ENCODE measurements at regions of chr2 and their contacts with region 1.

Region 1: DNA sequence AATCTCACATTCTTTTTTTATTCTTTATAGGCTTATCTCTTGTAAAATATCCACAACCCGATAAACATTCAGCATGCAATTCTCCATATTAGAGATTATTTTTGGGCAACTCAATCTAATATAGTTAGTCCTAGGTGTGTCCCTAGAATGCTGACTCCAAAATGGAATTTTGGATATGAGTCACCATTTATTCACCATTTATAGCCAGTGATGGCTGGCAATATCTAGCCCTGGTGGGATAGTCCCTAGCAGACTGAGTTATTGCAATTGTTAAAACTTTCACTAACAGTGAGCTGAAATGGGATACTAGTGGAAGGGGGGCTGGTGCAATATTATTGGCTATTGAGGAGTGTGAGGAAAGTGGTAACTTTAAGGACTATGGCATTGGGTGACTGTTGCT is 401.6 kb downstream of the SLC4A3 start:
- DNase-seq: no peak
- H3K4me3 ChIP-seq: no peak overlapping the region
- H3K27ac ChIP-seq: no peak overlapping the region
- H3K4me1 ChIP-seq: no peaks in the 10 kb centered on the region
- H3K27me3 ChIP-seq: no peaks in the 10 kb centered on the region
- CTCF ChIP-seq: no peak

Region 2: GRCh38 chr2:219968685-219969345 is 60.2 kb before region 1 on chr2:
- CTCF ChIA-PET with region 1: no interaction called
- POLR2A ChIA-PET with region 1: no interaction called
- intact Hi-C with region 1: no loop called
- DNase-seq: peak; percentile 86 to 89
- H3K4me3 ChIP-seq: no peak overlapping the region
- H3K27ac ChIP-seq: peak overlapping the region; percentile 86
- H3K4me1 ChIP-seq: peaks cover 35% of the 10 kb centered on the region
- H3K27me3 ChIP-seq: no peaks in the 10 kb centered on the region
- CTCF ChIP-seq: no peak

Region 3: GRCh38 chr2:221060376-221060775 is 1031.4 kb after region 1 on chr2:
- CTCF ChIA-PET with region 1: no interaction called
- POLR2A ChIA-PET with region 1: interaction called, 13 read pairs
- intact Hi-C with region 1: no loop called
- DNase-seq: no peak
- H3K4me3 ChIP-seq: no peak overlapping the region
- H3K27ac ChIP-seq: no peak overlapping the region
- H3K4me1 ChIP-seq: no peaks in the 10 kb centered on the region
- H3K27me3 ChIP-seq: no peaks in the 10 kb centered on the region
- CTCF ChIP-seq: no peak

Measured in PC-9 (cell line).